H1 (cell line): ENCODE measurements at regions of chr1 and their contacts with region 1.

Region 1: GRCh38 chr1:203702130-203702577 is 62.8 kb upstream of the LAX1 start:
- DNase-seq: peak; percentile 34 to 90
- H3K4me3 ChIP-seq: no peak overlapping the region
- H3K27ac ChIP-seq: no peak overlapping the region
- H3K4me1 ChIP-seq: no peaks in the 10 kb centered on the region
- H3K27me3 ChIP-seq: no peaks in the 10 kb centered on the region
- CTCF ChIP-seq: peak; percentile 40 to 94 (median 93)
- EP300 ChIP-seq: no peak
- POLR2A ChIP-seq: no peak
- RAD21 ChIP-seq: peak; percentile 99

Region 2: DNA sequence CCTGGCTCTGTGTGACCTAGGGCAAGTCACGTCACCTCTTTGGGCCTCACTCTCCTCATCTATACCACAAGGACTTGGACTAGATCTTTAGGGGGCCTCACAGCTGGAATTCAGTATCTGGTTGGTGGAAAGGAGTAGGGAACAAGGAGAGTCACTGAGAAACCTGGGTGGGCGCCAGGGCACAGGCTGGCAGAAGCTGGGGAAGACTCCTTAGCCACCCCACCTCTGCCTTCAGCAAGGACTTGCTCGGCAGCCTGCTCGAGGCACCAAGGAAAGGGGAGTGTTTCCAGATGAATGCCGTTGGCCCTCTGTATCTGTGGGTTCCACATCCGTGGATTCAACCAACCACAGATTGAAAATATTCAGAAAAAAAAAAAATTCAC is 209.4 kb before region 1 on chr1:
- CTCF ChIA-PET with region 1: interaction called, 22 read pairs
- POLR2A ChIA-PET with region 1: no interaction called
- DNase-seq: no peak
- H3K4me3 ChIP-seq: no peak overlapping the region
- H3K27ac ChIP-seq: no peak overlapping the region
- H3K4me1 ChIP-seq: peaks cover 0 to 15% (median 6%) of the 10 kb centered on the region in 4 experiments; a peak in 5 of 7 replicates
- H3K27me3 ChIP-seq: no peaks in the 10 kb centered on the region; a peak in 1 of 7 replicates
- CTCF ChIP-seq: no peak
- EP300 ChIP-seq: no peak
- POLR2A ChIP-seq: no peak
- RAD21 ChIP-seq: no peak

Region 3: DNA sequence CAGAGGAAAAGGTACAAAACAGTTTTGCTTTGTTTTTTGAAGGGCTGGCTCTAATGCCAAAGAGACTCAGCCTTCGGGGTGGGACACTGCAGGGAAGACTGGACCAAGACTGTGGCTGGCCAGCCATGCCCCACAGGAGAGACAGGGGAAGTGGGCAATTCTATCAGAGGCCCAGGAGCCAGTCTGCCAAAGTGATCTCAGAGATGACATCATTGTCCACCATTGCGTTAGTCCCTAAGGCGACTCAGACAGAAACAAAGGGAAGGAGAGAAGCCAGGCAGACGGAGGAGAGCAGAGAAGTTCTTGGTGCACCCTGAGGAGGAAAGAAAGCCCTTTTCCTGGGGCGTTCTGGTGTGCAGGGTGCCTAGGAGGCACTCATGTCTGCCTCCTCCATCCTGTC is 181.8 kb before region 1 on chr1:
- CTCF ChIA-PET with region 1: interaction called, 16 read pairs
- POLR2A ChIA-PET with region 1: no interaction called
- DNase-seq: no peak
- H3K4me3 ChIP-seq: no peak overlapping the region
- H3K27ac ChIP-seq: no peak overlapping the region
- H3K4me1 ChIP-seq: peaks cover 31 to 62% (median 45%) of the 10 kb centered on the region in 4 experiments
- H3K27me3 ChIP-seq: peaks cover 7 to 57% (median 47%) of the 10 kb centered on the region in 4 experiments
- CTCF ChIP-seq: no peak
- EP300 ChIP-seq: no peak
- POLR2A ChIP-seq: no peak
- RAD21 ChIP-seq: no peak

Region 4: GRCh38 chr1:203609979-203610493 is 92.1 kb before region 1 on chr1:
- CTCF ChIA-PET with region 1: interaction called, 18 read pairs
- POLR2A ChIA-PET with region 1: no interaction called
- DNase-seq: no peak
- H3K4me3 ChIP-seq: no peak overlapping the region
- H3K27ac ChIP-seq: no peak overlapping the region
- H3K4me1 ChIP-seq: no peaks in the 10 kb centered on the region
- H3K27me3 ChIP-seq: no peaks in the 10 kb centered on the region
- CTCF ChIP-seq: no peak
- EP300 ChIP-seq: no peak
- POLR2A ChIP-seq: no peak
- RAD21 ChIP-seq: no peak

Region 5: GRCh38 chr1:203625628-203626019 is 76.5 kb before region 1 on chr1:
- CTCF ChIA-PET with region 1: interaction called, 23 read pairs
- POLR2A ChIA-PET with region 1: no interaction called
- DNase-seq: no peak
- H3K4me3 ChIP-seq: no peak overlapping the region
- H3K27ac ChIP-seq: no peak overlapping the region
- H3K4me1 ChIP-seq: peaks cover 8 to 25% (median 17%) of the 10 kb centered on the region in 4 experiments
- H3K27me3 ChIP-seq: peaks cover 3 to 23% (median 9%) of the 10 kb centered on the region in 4 experiments
- CTCF ChIP-seq: no peak
- EP300 ChIP-seq: no peak
- POLR2A ChIP-seq: no peak
- RAD21 ChIP-seq: peak; percentile 25 to 27; a peak in 3 of 4 replicates

Region 6: DNA sequence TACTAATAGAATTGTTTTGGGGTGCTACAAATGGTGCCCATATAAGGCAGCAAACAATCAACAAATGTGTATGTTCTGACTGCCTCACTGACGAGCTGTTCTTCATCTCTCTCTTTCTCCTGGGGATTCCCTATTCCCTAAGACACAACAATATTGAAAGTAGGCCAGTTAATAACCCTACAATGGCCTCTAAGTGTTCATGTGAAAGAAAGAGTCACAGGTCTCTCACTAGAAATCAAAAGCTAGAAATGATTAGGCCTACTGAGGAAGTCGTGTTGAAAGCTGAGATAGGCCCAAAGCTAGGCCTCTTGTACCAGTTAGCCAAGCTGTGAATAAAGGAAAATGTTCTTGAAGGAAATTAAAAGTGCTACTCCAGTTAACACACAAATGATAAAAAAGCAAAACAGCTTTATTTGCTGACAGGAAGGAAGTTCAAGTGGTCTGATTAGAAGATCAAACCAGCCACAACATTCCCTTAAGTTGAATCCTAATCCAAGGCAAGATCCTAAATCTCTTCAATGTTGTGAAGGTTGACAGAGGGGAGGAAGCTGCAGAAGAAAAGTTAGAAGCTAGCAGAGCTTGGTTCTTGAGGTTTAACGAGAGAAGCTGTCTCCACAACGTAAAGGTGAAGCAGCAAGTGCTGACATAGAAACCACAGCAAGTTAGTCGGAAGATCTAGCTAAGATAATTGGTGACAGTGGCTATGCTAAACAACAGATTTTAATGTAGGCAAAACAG is 49.3 kb before region 1 on chr1:
- CTCF ChIA-PET with region 1: interaction called, 12 read pairs
- POLR2A ChIA-PET with region 1: no interaction called
- DNase-seq: no peak
- H3K4me3 ChIP-seq: no peak overlapping the region
- H3K27ac ChIP-seq: no peak overlapping the region
- H3K4me1 ChIP-seq: peaks cover 0 to 10% (median 6%) of the 10 kb centered on the region in 4 experiments; a peak in 6 of 7 replicates
- H3K27me3 ChIP-seq: no peaks in the 10 kb centered on the region
- CTCF ChIP-seq: no peak
- EP300 ChIP-seq: no peak
- POLR2A ChIP-seq: no peak
- RAD21 ChIP-seq: no peak

Region 7: GRCh38 chr1:203673550-203674427 is 28.4 kb before region 1 on chr1:
- CTCF ChIA-PET with region 1: interaction called, 17 read pairs
- POLR2A ChIA-PET with region 1: no interaction called
- DNase-seq: no peak
- H3K4me3 ChIP-seq: no peak overlapping the region
- H3K27ac ChIP-seq: no peak overlapping the region
- H3K4me1 ChIP-seq: peaks cover 3 to 16% (median 10%) of the 10 kb centered on the region in 4 experiments
- H3K27me3 ChIP-seq: no peaks in the 10 kb centered on the region
- CTCF ChIP-seq: peak in 2 of 3 experiments; percentile 1 to 32; a peak in 1 of 4 replicates
- EP300 ChIP-seq: no peak
- POLR2A ChIP-seq: no peak
- RAD21 ChIP-seq: peak in 1 of 2 experiments; percentile 16; a peak in 1 of 4 replicates